Heart left ventricle (tissue), 16 donors: ENCODE measurements at regions of chr3 and their contacts with region 1.

Region 1: DNA sequence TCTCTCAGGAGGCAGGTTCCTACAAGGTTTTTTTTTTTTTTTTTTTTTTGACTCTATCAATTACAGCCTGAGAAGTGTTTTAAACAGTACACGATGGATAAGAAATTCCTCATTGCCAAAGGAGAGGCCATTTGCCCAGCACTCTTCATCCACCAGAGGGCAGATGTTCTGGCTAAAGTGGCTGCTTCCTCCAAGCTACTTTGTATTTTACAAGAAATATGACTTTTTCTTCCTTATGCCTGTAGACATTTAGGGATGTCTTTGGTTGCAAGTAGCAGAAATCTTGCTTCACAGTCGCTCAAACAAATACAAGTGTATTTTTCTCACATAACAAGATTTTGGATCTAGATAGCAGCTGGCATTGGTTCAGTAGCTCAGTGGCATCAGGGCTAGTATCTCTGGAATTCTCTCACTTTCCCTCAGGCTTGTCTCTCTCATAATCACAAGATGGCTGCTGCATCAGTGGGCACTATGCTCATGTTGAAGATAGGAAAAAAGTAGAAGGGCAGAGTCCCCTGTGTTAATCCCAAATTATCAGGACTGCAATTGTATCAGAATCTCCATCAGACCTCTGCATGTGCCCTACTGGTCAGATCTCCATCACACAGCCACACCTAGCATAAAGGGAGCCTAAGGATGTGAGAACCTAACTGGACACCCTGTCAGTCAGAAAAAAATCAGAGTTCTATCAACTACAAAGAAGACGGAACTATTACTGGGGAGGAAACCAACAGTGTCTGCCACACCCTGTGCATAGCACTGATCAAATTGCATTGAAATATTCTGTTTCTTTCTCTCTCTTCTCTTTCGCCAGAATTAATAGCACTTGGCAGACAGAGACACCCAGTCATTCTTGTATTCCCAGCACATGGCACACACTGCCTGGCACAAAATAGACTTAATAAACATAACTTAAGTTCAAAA is 138.9 kb upstream of the COL8A1 start:
- DNase-seq: peak in 4 of 5 donors; percentile 36 to 46 (median 40)
- ATAC-seq: peak; percentile 22 to 69 (median 66)
- H3K4me3 ChIP-seq: no peak overlapping the region
- H3K27ac ChIP-seq: peak overlapping the region in 5 of 12 donors; percentile 2 to 44 (median 32)
- H3K4me1 ChIP-seq: peaks cover 0 to 51% (median 25%) of the 10 kb centered on the region in 12 donors
- H3K27me3 ChIP-seq: no peaks in the 10 kb centered on the region
- CTCF ChIP-seq: peak; percentile 60 to 85 (median 76)
- POLR2A ChIP-seq: no peak

Region 2: GRCh38 chr3:99269606-99270351 is 229.7 kb before region 1 on chr3:
- intact Hi-C with region 1: no loop called
- DNase-seq: peak in 3 of 5 donors; percentile 23 to 43 (median 36)
- ATAC-seq: peak; percentile 65 to 95 (median 82)
- H3K4me3 ChIP-seq: no peak overlapping the region
- H3K27ac ChIP-seq: peak overlapping the region in 4 of 12 donors; percentile 4 to 58 (median 16)
- H3K4me1 ChIP-seq: no peaks in the 10 kb centered on the region
- H3K27me3 ChIP-seq: no peaks in the 10 kb centered on the region
- CTCF ChIP-seq: peak in 1 of 12 donors; percentile 12
- POLR2A ChIP-seq: no peak

Region 3: GRCh38 chr3:99458013-99458412 is 41.5 kb before region 1 on chr3:
- intact Hi-C with region 1: no loop called
- DNase-seq: no peak
- ATAC-seq: no peak
- H3K4me3 ChIP-seq: no peak overlapping the region
- H3K27ac ChIP-seq: no peak overlapping the region
- H3K4me1 ChIP-seq: no peaks in the 10 kb centered on the region
- H3K27me3 ChIP-seq: no peaks in the 10 kb centered on the region
- CTCF ChIP-seq: no peak
- POLR2A ChIP-seq: no peak

Region 4: GRCh38 chr3:99544786-99545281 is 45.3 kb after region 1 on chr3:
- intact Hi-C with region 1: loop called in 5 of 10 experiments (anchors 5 kb)
- DNase-seq: peak in 4 of 5 donors; percentile 24 to 61 (median 42)
- ATAC-seq: peak; percentile 46 to 73 (median 64)
- H3K4me3 ChIP-seq: no peak overlapping the region
- H3K27ac ChIP-seq: peak overlapping the region; percentile 41 to 80 (median 64)
- H3K4me1 ChIP-seq: peaks cover 0 to 61% (median 32%) of the 10 kb centered on the region in 12 donors
- H3K27me3 ChIP-seq: no peaks in the 10 kb centered on the region
- CTCF ChIP-seq: no peak
- POLR2A ChIP-seq: no peak

Region 5: DNA sequence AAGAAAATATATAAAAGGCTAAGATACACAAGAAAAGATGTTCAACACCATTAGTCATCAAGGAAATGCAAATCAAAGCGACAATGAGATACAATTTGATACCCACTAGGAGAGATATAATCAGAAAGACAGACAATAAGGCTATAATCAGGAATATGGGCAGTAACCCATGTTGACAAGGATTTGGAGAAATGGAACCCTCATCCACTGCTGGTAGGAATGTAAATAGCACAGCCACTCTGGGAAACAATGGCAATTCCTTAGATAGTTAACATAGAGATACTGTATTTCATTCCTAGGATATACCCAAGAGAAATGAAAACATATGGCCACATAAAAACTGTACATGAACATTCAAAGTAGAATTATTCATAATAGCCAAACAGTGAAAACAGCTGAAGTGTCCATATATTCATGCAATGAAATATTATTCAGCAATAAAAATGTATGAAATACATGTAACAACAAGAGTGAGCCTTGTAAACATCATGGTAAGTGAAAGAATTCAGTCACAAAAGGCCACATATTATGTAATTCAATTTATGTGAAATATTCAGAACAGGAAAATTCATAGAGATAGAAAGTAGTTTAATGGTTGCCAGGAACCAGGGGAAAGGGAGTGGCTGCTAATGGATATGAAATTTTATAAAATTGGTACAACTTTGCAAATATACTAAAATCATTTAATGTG is 120.7 kb after region 1 on chr3:
- intact Hi-C with region 1: no loop called
- DNase-seq: no peak
- ATAC-seq: no peak
- H3K4me3 ChIP-seq: no peak overlapping the region
- H3K27ac ChIP-seq: no peak overlapping the region
- H3K4me1 ChIP-seq: no peaks in the 10 kb centered on the region
- H3K27me3 ChIP-seq: no peaks in the 10 kb centered on the region
- CTCF ChIP-seq: no peak
- POLR2A ChIP-seq: no peak

Region 6: GRCh38 chr3:99638167-99638948 is 138.9 kb after region 1 on chr3 and contains the start of gene COL8A1:
- intact Hi-C with region 1: loop called in 3 of 10 experiments (anchors 5 to 10 kb)
- DNase-seq: peak; percentile 61 to 80 (median 76)
- ATAC-seq: peak; percentile 71 to 94 (median 88)
- H3K4me3 ChIP-seq: peak within 1 kb of the TSS; percentile 22 to 76 (median 58)
- H3K27ac ChIP-seq: peak within 1 kb of the TSS; percentile 50 to 91 (median 78)
- H3K4me1 ChIP-seq: peaks cover 0 to 26% (median 5%) of the 10 kb centered on the region in 12 donors
- H3K27me3 ChIP-seq: peaks cover 0 to 39% (median 15%) of the 10 kb centered on the region in 9 donors
- CTCF ChIP-seq: no peak
- POLR2A ChIP-seq: peak in 1 of 2 donors; percentile 41
- total RNA-seq, gene COL8A1: 12.5 to 39.2 (median 22.7) TPM

Region 7: DNA sequence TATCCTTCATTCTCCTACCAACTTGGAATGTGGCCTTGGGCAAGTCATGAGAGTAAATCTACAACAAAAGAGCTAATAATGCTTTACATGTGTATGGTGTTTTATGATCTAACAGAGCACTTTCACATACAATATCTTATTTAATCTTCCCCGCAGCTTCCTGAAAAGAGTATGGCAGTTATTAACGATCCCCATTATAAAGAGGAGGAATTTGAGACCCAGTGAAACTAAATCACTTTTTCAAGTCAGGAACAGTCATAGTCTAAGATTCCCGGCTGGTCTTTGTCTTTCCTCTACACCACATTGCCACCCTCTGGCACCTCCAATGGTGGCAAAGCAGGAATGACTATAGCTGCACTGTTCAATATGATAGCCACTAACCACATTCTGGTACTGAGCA is 248.4 kb after region 1 on chr3:
- intact Hi-C with region 1: loop called (anchors 2 to 10 kb)
- DNase-seq: no peak
- ATAC-seq: peak in 3 of 4 donors; percentile 45 to 69 (median 51)
- H3K4me3 ChIP-seq: no peak overlapping the region
- H3K27ac ChIP-seq: no peak overlapping the region
- H3K4me1 ChIP-seq: peaks cover 0 to 6% (median 0%) of the 10 kb centered on the region in 12 donors
- H3K27me3 ChIP-seq: no peaks in the 10 kb centered on the region
- CTCF ChIP-seq: peak in 8 of 12 donors; percentile 11 to 37 (median 25)
- POLR2A ChIP-seq: no peak

Region 8: GRCh38 chr3:99789011-99789721 is 289.7 kb after region 1 on chr3:
- intact Hi-C with region 1: loop called in 4 of 10 experiments (anchors 5 to 10 kb)
- DNase-seq: peak in 3 of 5 donors; percentile 15 to 34 (median 25)
- ATAC-seq: peak; percentile 80 to 95 (median 94)
- H3K4me3 ChIP-seq: no peak overlapping the region
- H3K27ac ChIP-seq: peak overlapping the region in 1 of 12 donors; percentile 9
- H3K4me1 ChIP-seq: peaks cover 0 to 7% (median 0%) of the 10 kb centered on the region in 12 donors
- H3K27me3 ChIP-seq: no peaks in the 10 kb centered on the region
- CTCF ChIP-seq: peak; percentile 40 to 73 (median 64)
- POLR2A ChIP-seq: no peak